ENCODE measurements at regions of chr9 and their contacts with region 1.

Region 1: DNA sequence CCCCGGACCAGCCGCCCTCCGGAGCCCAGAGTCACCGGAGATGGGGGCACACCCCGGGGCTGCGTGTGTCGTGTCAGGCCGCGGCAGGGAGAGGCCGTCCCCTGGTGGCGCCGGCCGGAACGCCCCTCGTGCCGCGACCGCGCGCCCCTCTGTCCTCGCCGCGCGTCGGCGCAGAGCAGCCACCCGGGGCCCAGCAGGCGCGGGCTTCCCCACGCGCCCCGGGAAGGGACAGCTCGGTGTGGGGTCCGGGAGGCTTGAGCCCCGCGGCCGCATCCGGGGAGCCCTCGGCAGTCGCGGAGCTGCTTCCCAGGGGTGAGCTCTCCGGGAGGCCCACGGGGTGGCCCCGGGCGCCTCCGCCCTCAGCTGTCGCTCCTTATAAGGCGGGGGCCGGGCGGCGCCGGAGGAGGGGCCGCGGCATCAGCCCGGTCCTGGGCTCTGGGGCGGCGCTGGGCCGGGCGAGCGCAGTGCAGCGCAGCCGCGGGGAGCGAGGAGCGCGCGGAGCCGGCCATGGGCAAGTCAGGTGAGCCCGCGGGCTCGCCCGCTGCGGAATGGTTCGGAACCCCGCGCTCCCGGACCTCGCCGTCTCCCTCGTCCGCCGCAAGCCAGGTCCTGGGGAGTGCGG is at the start of gene GLIPR2:
- DNase-seq: peak in 1 of 2 donors; percentile 90
- H3K4me3 ChIP-seq: peak within 1 kb of the TSS; percentile 84 to 90
- H3K27ac ChIP-seq: peak within 1 kb of the TSS; percentile 71 to 78
- H3K4me1 ChIP-seq: peaks cover 0 to 16% of the 10 kb centered on the region in 2 donors
- H3K27me3 ChIP-seq: no peaks in the 10 kb centered on the region
- CTCF ChIP-seq: peak; percentile 13 to 34 (median 20)
- total RNA-seq, gene GLIPR2: 54.4 TPM

Region 2: DNA sequence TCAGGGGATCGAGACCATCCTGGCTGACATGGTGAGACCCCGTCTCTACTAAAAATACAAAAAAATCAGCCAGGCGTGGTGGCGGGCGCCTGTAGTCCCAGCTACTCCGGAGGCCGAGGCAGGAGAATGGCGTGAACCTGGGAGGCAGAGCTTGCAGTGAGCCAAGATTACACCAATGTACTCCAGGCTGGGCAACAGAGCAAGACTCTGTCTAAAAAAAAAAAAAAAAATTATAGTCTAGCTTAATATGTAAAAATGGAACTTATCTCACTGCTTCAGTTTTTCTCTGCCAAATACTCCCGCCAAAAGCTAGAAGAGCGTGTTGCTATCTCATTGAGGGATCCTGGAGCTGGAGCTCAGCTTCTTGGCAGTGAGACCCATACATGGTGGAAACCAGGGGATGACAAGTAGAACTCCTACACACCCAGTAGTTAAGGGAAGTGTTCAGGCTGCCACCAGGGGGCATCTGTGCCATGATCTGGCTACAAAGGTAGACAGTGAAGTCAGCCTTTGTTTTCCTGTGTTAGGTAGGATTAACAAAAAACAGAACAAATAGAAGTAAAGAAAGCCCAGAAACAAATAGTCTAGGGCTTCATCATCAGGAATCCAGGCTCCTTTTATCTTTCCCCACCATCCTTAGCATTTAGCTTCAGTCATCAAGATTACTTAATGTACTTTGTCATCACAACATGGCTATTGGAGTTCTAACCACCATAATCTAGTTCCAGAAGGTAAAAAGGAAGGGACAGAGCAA is 33.5 kb before region 1 on chr9:
- intact Hi-C with region 1: loop called (anchors 1 kb)
- DNase-seq: peak; percentile 50 to 88
- H3K4me3 ChIP-seq: no peak overlapping the region
- H3K27ac ChIP-seq: peak overlapping the region; percentile 31 to 57
- H3K4me1 ChIP-seq: no peaks in the 10 kb centered on the region
- H3K27me3 ChIP-seq: no peaks in the 10 kb centered on the region
- CTCF ChIP-seq: peak; percentile 75 to 82 (median 79)

Region 3: DNA sequence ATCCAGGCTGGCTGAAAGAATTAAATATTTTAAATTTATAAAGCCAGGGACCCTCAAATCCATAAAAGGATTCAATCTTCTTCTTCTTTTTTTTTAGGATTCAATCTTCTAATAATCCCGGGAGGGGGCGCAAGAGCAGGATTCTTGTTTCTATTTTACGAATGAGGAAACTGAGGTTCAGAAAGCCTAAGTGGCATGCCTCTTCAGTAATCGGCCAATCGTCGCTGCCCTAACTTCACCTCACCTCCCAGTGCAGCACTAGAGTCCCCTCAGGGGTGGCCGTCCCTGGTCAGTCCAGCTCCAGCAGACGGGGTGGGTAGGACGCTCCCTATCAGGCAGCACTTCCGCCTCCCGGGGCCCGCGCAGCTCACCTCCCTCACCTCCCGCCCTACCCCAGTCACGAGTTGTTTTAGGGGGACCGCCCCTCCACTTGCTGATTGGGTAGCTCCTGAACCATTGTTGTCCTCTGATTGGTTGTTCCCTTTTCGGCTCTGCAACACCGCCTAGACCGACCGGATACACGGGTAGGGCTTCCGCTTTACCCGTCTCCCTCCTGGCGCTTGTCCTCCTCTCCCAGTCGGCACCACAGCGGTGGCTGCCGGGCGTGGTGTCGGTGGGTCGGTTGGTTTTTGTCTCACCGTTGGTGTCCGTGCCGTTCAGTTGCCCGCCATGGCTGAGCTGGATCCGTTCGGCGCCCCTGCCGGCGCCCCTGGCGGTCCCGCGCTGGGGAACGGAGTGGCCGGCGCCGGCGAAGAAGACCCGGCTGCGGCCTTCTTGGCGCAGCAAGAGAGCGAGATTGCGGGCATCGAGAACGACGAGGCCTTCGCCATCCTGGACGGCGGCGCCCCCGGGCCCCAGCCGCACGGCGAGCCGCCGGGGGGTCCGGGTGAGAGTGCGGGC is 54.3 kb after region 1 on chr9 and contains the start of gene CLTA:
- intact Hi-C with region 1: loop called (anchors 1 kb)
- DNase-seq: peak; percentile 91 to 98
- H3K4me3 ChIP-seq: peak within 1 kb of the TSS; percentile 86 to 99
- H3K27ac ChIP-seq: peak within 1 kb of the TSS; percentile 94 to 95
- H3K4me1 ChIP-seq: peaks cover 4 to 31% of the 10 kb centered on the region in 2 donors
- H3K27me3 ChIP-seq: no peaks in the 10 kb centered on the region
- CTCF ChIP-seq: peak; percentile 43 to 63 (median 53)
- total RNA-seq, gene CLTA: 222 TPM